ENCODE measurements at regions of chr10 and their contacts with region 1.

Region 1: DNA sequence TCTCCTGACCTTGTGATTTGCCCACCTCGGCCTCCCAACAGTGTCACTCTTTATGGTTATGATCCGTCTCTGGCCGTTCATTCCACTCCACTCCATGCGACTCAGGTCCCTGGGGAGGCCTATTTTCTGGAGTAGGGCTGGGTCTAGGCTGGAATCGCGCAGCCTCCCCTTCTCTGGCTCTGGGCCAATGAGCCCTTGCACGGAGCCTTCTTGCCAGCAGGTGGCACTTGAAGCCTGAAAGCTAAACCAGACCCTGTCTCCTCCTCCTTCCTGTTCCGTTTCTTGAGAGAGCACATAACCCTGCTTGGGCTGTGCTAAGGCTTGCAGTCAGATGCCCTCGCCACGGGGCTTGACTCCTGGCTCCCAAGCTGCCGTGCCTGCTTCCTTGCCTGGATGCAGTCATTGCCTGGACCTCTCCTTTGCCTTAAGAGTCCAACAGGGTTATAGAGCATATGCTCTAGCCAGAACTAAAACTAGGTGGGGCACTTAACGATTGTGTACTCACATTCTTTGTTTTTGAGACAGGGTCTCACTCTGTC is 9.6 kb upstream of the DNAJB12 start:
- DNase-seq: peak; percentile 88 to 90
- H3K4me3 ChIP-seq: no peak overlapping the region
- H3K27ac ChIP-seq: peak overlapping the region in 1 of 3 donors; percentile 24
- H3K4me1 ChIP-seq: peaks cover 0 to 10% of the 10 kb centered on the region in 2 donors
- H3K27me3 ChIP-seq: no peaks in the 10 kb centered on the region
- CTCF ChIP-seq: peak; percentile 76 to 97 (median 92)
- POLR2A ChIP-seq: peak in 1 of 2 donors; percentile 55

Region 2: DNA sequence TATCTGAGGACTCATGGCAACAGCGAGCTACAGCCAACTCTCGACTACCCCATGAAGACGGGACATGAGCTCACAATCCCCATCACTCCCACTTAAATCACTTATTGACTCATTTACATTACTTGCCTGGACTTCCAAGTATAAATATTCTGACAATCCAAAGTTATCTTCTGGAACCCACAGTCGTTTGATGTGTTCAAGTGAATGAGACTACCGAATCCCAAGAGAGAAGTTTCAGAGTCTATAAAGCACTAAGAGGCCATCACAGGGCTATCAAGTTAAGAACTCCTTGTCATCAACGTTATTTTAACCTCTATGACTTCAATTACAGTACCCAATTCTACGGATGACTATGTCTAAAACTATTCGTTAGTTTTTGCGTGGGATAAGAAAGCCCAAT is 160.0 kb before region 1 on chr10:
- intact Hi-C with region 1: no loop called
- DNase-seq: no peak
- H3K4me3 ChIP-seq: no peak overlapping the region
- H3K27ac ChIP-seq: no peak overlapping the region
- H3K4me1 ChIP-seq: peaks cover 0 to 12% of the 10 kb centered on the region in 2 donors
- H3K27me3 ChIP-seq: no peaks in the 10 kb centered on the region
- CTCF ChIP-seq: no peak
- POLR2A ChIP-seq: no peak

Region 3: DNA sequence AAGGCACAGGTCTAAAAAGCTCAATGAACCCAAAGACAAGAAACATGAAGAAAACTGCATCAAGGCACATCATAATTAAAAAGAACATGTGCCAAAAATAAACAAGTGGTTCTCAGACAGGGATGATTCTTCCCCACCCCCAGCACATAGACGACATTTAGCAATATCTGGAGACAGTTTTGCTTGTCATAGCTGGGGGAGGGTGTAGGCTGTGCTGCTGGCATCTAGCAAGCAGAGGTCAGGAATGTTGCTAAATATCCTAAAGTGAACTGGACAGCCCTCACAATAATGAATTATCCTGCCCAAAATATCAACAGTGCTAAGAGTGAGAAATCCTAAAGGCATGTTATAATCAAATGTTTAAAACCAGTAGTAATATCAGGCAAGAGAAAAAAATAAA is 138.9 kb after region 1 on chr10:
- intact Hi-C with region 1: no loop called
- DNase-seq: no peak
- H3K4me3 ChIP-seq: no peak overlapping the region
- H3K27ac ChIP-seq: no peak overlapping the region
- H3K4me1 ChIP-seq: no peaks in the 10 kb centered on the region
- H3K27me3 ChIP-seq: no peaks in the 10 kb centered on the region
- CTCF ChIP-seq: no peak
- POLR2A ChIP-seq: no peak

Region 4: DNA sequence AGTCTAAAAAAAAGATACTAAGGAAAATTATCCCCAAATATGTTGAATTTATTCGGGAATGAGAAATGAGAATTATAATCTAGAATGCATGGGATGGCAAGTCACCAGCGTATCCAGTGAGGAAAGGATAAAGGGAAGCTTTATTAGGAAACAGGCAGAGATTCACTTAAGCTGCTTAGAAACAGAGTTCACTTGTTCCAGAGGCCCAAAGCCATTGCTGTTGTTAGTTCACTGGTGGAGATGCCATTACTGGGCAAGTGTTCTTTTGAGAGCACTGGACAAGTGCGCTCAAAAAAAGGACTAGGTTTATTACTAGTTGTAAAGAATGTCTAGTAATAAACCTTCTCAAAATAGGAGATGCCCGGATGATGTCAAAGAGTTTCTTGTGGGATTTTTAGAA is 210.3 kb after region 1 on chr10:
- intact Hi-C with region 1: no loop called
- DNase-seq: no peak
- H3K4me3 ChIP-seq: no peak overlapping the region
- H3K27ac ChIP-seq: no peak overlapping the region
- H3K4me1 ChIP-seq: no peaks in the 10 kb centered on the region
- H3K27me3 ChIP-seq: no peaks in the 10 kb centered on the region
- CTCF ChIP-seq: no peak
- POLR2A ChIP-seq: no peak

Region 5: GRCh38 chr10:72692057-72692910 is 328.0 kb after region 1 on chr10 and contains the start of gene MCU:
- intact Hi-C with region 1: loop called (anchors 10 kb)
- DNase-seq: peak; percentile 97
- H3K4me3 ChIP-seq: peak within 1 kb of the TSS; percentile 68 to 89 (median 87)
- H3K27ac ChIP-seq: peak within 1 kb of the TSS; percentile 84 to 86 (median 85)
- H3K4me1 ChIP-seq: peaks cover 16 to 21% of the 10 kb centered on the region in 2 donors
- H3K27me3 ChIP-seq: no peaks in the 10 kb centered on the region
- CTCF ChIP-seq: no peak
- POLR2A ChIP-seq: peak; percentile 79 to 99
- total RNA-seq, gene MCU: 11.4 to 33.3 (median 24.9) TPM

Region 6: DNA sequence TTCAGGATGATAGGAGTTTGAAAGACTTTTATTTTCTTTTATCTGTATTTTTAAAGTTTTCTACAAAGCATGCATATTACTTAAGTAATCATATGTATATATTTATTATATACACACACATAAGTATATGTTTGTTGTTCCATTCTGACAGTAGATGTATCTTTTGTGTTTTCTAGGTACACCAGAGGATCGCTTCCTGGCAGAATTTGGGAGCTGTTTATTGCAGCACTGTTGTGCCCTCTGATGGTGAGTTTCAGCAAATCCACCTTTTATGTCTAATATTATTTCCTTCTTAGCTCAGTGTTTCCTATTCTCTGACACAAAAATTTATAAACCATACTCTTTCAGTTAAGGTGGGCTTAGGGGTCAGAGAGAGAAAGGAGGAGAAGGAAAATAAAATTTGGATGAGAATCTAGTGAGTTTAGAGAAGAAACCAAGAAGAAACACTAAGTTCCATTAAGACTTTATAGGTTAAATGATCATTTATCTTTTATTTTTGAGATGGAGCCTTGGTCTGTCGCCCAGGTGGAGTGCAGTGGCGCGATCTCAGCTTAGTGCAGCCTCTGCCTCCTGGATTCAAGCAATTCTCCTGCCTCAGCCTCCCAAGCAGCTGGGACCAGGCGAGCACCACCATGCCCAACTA is 470.0 kb after region 1 on chr10:
- intact Hi-C with region 1: loop called (anchors 5 kb)
- DNase-seq: peak; percentile 42 to 43
- H3K4me3 ChIP-seq: no peak overlapping the region
- H3K27ac ChIP-seq: no peak overlapping the region
- H3K4me1 ChIP-seq: peaks cover 15 to 36% of the 10 kb centered on the region in 2 donors
- H3K27me3 ChIP-seq: no peaks in the 10 kb centered on the region
- CTCF ChIP-seq: peak; percentile 32 to 85 (median 66)
- POLR2A ChIP-seq: no peak

Region 7: DNA sequence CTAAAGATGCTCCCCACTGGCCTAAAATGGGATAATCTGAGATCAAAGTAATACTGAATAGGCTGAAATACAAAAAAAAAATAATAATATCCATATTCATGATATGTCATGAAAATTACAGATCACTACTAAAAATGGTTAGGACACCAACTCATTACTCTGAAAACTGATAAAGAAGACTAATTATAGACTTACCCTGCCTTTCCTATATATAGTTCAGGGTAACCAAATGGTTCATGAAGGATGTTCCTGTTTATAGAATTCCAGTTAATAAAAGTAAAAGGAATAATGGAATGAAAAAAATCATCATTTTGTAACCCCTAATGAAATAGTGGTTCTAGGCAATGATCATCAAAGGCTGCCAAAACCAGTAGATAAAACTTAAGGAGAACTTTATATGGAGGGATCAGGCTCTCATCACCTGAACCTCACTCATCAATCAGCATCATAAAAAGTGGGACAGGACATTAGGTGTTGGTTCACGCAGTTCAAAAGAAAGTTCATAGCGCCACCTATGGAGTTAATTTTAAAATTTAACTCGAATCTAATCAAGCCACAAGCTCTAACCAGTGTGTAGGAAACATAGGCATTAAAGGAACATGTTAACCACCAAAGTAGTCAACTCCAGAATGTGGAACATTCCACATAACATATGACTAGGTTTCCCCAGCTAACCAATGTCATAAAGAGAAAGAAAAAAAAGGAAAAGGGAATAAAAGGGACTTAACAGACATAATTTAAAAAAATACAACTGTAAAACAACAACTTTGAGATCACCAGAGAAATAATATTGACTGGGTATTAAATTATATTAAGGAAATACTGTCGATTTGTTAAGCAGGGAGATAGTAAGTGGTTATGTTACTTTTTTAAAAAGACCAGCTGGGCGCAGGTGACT is 696.7 kb after region 1 on chr10:
- intact Hi-C with region 1: loop called (anchors 10 kb)
- DNase-seq: no peak
- H3K4me3 ChIP-seq: no peak overlapping the region
- H3K27ac ChIP-seq: no peak overlapping the region
- H3K4me1 ChIP-seq: no peaks in the 10 kb centered on the region
- H3K27me3 ChIP-seq: no peaks in the 10 kb centered on the region
- CTCF ChIP-seq: peak in 3 of 6 experiments; percentile 37 to 47 (median 47)
- POLR2A ChIP-seq: no peak

Region 8: GRCh38 chr10:73174148-73174925 is 810.0 kb after region 1 on chr10:
- intact Hi-C with region 1: loop called (anchors 10 kb)
- DNase-seq: no peak
- H3K4me3 ChIP-seq: no peak overlapping the region
- H3K27ac ChIP-seq: no peak overlapping the region
- H3K4me1 ChIP-seq: no peaks in the 10 kb centered on the region
- H3K27me3 ChIP-seq: no peaks in the 10 kb centered on the region
- CTCF ChIP-seq: no peak
- POLR2A ChIP-seq: no peak